ENCODE measurements at regions of chr1 and their contacts with region 1.

Region 1: GRCh38 chr1:25549273-25550154 is 6.1 kb downstream of the LDLRAP1 start:
- DNase-seq: peak; percentile 79
- H3K4me3 Mint-ChIP-seq: peak overlapping the region; percentile 66
- H3K27ac Mint-ChIP-seq: peak overlapping the region; percentile 96
- H3K4me1 Mint-ChIP-seq: peaks cover 85% of the 10 kb centered on the region
- H3K27me3 Mint-ChIP-seq: no peaks in the 10 kb centered on the region

Region 2: GRCh38 chr1:25572708-25573600 is 23.4 kb after region 1 on chr1:
- CTCF ChIA-PET with region 1: interaction called, 10 read pairs
- POLR2A ChIA-PET with region 1: no interaction called
- DNase-seq: peak; percentile 57
- H3K4me3 Mint-ChIP-seq: no peak overlapping the region
- H3K27ac Mint-ChIP-seq: no peak overlapping the region
- H3K4me1 Mint-ChIP-seq: peaks cover 15% of the 10 kb centered on the region
- H3K27me3 Mint-ChIP-seq: no peaks in the 10 kb centered on the region

Measured in activated CD4-positive, alpha-beta T cell treated with anti-CD3 and anti-CD28 coated beads, Interleukin-2, amount 10 ng/mL, durations not matched to agents 7 days and 5 days (primary cell).